ENCODE measurements at regions of chr11 and their contacts with region 1.

Region 1: GRCh38 chr11:72722050-72722748 is 30.0 kb downstream of the ARAP1 start:
- DNase-seq: peak; percentile 93
- H3K4me3 Mint-ChIP-seq: peak overlapping the region; percentile 90
- H3K27ac Mint-ChIP-seq: peak overlapping the region; percentile 95
- H3K4me1 Mint-ChIP-seq: peaks cover 49% of the 10 kb centered on the region
- H3K27me3 Mint-ChIP-seq: no peaks in the 10 kb centered on the region

Region 2: DNA sequence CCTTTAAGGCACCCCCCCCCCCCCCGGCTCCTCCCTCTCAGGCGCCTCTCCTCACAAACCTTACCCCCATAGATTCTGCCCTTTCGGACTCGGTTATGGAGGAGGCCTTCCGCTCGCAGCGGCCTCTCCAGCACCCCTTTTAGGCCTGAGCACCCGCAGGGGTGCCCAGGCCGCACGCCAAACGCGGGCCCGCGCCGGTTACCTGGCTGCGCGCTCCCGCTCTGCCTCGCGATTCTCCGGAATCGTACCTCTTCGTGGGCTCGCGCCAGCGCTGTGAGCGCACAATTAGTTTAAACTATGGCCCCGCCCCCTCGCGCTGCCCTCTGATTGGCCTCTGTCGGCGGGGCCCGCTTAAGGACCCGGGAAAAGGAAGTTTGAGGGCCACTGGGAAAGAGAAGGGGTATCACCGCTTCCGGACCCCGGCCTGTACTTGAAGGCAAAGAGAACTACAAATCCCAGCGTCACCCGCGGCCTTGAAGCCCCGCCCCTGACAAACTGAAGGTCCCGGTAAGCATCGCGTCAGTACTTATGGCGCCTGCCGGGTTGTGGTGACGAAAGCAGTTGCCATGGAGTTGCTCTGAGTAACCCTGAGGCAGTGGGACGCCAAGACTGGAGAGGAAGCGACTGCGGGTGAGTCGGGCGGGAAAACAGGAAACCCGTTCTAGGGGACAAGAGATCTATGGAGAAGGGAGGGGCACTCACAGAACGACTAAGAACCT is 641.8 kb before region 1 on chr11 and contains the starts of genes LRRC51 and NUMA1:
- CTCF ChIA-PET with region 1: no interaction called
- intact Hi-C with region 1: no loop called
- DNase-seq: peak; percentile 100
- H3K4me3 Mint-ChIP-seq: peak within 1 kb of the TSS; percentile 88
- H3K27ac Mint-ChIP-seq: peak within 1 kb of the TSS; percentile 90
- H3K4me1 Mint-ChIP-seq: peaks cover 37% of the 10 kb centered on the region
- H3K27me3 Mint-ChIP-seq: no peaks in the 10 kb centered on the region
- total RNA-seq, gene LRRC51: 6.8 to 8.3 TPM
- total RNA-seq, gene NUMA1: 189 to 194 TPM

Region 3: DNA sequence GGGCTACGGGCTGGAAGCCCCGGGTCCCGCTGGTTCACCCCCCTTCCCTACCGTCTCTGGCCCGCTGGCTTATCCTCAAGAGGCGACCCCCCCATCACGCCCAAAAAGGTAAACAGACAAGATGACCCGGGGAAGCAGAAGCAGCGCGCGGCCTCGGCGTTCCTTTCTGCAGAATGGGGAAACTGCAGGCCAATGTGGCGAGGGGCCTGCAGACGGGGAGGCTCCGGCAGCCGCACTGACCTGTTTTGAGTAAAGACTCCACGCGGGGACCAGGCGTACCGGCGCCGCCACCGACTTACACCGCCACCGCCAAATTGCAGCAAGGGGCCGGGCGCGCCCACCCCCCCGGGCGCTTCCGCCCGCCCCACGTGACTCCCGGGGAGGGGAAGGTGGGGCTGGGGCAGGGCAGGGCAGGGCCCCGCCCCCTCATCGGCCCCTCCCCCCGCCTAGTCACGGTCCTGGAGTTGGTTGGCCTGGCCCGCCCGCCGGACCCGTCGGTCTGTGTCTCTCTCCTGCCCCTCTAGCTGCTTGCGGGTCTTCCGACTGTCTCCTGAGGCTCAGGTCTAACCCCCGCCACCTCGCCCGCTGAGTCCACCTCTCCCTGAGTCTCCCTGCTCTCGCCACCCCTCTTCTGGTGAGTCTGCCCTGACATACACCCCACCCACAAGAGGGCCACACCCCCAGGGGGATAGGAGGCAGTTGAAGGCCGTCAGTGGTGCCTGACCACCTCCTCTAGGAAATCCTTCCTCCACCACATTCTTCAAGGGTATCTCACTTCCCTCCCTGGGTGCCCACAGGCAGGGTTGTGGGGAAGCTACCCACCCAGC is 30.1 kb after region 1 on chr11 and contains the start of gene ARAP1:
- CTCF ChIA-PET with region 1: interaction called, 7 read pairs
- intact Hi-C with region 1: loop called (anchors 1 kb)
- DNase-seq: peak; percentile 74
- H3K4me3 Mint-ChIP-seq: peak within 1 kb of the TSS; percentile 89
- H3K27ac Mint-ChIP-seq: peak within 1 kb of the TSS; percentile 74
- H3K4me1 Mint-ChIP-seq: peaks cover 42% of the 10 kb centered on the region
- H3K27me3 Mint-ChIP-seq: no peaks in the 10 kb centered on the region
- total RNA-seq, gene ARAP1: 64.7 to 70.1 TPM

Region 4: GRCh38 chr11:72814286-72815109 is 92.3 kb after region 1 on chr11 and contains the start of gene ATG16L2:
- CTCF ChIA-PET with region 1: interaction called, 17 read pairs
- intact Hi-C with region 1: loop called (anchors 1 kb)
- DNase-seq: peak; percentile 89
- H3K4me3 Mint-ChIP-seq: peak within 1 kb of the TSS; percentile 100
- H3K27ac Mint-ChIP-seq: peak within 1 kb of the TSS; percentile 97
- H3K4me1 Mint-ChIP-seq: peaks cover 34% of the 10 kb centered on the region
- H3K27me3 Mint-ChIP-seq: no peaks in the 10 kb centered on the region
- total RNA-seq, gene ATG16L2: 105 to 114 TPM

Region 5: DNA sequence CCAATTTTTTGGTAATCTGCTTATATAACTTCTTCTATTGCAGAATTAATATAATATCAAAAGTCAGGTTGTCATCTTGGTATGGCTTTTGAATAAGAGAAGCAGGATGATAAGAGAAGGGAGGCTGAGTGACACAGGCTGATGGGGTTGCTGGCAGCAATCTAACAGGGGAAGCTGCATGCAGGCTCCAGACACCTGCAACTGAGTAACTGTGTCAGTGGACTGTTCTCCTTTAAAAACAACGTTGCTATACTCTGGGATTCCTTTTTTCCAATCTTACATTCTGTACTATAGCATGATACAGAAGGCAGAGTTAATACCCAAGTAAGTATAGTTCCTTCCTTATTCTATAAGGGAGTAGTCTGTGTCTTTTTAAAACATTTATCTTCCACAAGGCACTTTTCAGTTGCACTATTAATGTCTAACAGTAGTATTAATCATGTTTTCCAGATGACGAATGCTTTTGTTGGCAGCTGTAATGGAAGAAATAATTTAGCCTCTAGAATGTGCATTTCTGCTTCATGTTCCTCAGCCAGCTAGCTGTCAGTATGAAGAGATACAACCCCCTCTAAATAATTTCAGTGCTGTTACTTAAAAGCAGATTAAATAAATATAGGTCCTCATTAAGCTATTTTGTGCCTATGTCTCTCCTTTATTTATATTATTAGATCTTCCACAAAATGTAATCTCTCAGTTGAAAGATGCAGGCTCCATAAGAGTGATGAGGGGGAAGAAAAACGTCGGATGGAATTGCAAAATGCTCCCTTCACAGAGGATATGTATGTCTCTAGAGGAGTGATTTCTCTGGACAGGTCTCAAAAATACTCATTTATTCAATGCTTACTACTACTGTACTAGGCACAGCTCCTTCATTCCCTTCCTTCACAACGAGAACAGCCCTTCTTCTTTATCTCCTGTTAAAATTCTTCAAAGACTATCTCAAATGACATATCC is 142.8 kb after region 1 on chr11:
- CTCF ChIA-PET with region 1: no interaction called
- intact Hi-C with region 1: no loop called
- DNase-seq: no peak
- H3K4me3 Mint-ChIP-seq: no peak overlapping the region
- H3K27ac Mint-ChIP-seq: no peak overlapping the region
- H3K4me1 Mint-ChIP-seq: peaks cover 15% of the 10 kb centered on the region
- H3K27me3 Mint-ChIP-seq: no peaks in the 10 kb centered on the region

Region 6: GRCh38 chr11:73141848-73142286 is 419.7 kb after region 1 on chr11:
- CTCF ChIA-PET with region 1: interaction called, 3 read pairs
- intact Hi-C with region 1: loop called (anchors 10 kb)
- DNase-seq: peak; percentile 64
- H3K4me3 Mint-ChIP-seq: peak overlapping the region; percentile 96
- H3K27ac Mint-ChIP-seq: peak overlapping the region; percentile 92
- H3K4me1 Mint-ChIP-seq: peaks cover 42% of the 10 kb centered on the region
- H3K27me3 Mint-ChIP-seq: no peaks in the 10 kb centered on the region

Region 7: GRCh38 chr11:73189315-73189714 is 467.1 kb after region 1 on chr11:
- CTCF ChIA-PET with region 1: no interaction called
- intact Hi-C with region 1: no loop called
- DNase-seq: no peak
- H3K4me3 Mint-ChIP-seq: no peak overlapping the region
- H3K27ac Mint-ChIP-seq: no peak overlapping the region
- H3K4me1 Mint-ChIP-seq: peaks cover 5% of the 10 kb centered on the region
- H3K27me3 Mint-ChIP-seq: peaks cover 5% of the 10 kb centered on the region

Region 8: DNA sequence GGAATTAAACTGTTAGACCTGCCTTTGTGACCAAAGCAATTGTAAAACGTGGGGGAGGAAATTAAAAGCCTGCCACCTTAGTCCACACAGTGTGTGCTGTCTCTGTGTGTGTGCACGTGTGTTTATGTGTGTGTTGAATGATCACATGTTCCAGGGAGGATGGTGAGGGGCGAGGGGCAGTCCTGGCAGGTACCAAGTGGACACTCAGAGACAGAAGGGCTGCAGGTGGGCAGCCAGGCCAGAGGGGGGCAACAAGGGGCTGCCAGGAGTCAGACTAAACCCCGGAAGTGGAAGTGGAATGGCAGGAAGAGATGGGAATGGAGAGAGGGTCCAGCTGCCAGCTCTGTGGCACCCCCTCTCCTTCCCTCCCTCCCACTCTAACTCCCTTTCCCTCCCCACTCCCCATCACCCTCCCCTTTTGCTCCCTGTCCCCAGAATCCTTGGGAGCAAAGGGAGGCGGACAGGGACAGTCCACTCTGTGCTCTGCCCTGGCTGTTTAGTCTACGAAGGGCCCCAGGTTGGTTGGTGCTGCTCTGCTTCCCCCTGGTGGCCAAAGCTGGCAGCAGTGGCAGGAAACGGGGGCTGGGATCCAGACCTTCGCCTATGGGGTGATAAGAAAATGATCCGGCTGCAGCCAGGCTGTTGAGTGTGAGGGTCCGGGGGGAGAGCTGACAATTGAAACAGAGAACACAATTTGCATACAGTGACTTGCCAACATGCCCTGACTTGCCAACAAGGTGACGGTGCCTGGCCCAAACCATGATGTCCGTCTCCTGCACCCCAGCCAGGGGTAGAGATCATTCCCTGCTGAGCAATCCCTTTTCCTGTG is 520.3 kb after region 1 on chr11:
- CTCF ChIA-PET with region 1: no interaction called
- intact Hi-C with region 1: loop called (anchors 5 kb)
- DNase-seq: peak; percentile 80
- H3K4me3 Mint-ChIP-seq: no peak overlapping the region
- H3K27ac Mint-ChIP-seq: no peak overlapping the region
- H3K4me1 Mint-ChIP-seq: peaks cover 2% of the 10 kb centered on the region
- H3K27me3 Mint-ChIP-seq: no peaks in the 10 kb centered on the region

Measured in activated naive CD4-positive, alpha-beta T cell treated with anti-CD3 and anti-CD28 coated beads for 36 hours (primary cell).